ENCODE measurements at regions of chr9 and their contacts with region 1.

Region 1: GRCh38 chr9:9603345-9603744 is 1009.5 kb downstream of the PTPRD start:
- DNase-seq: no peak
- ATAC-seq: no peak
- H3K4me3 ChIP-seq: no peak overlapping the region
- H3K27ac ChIP-seq: no peak overlapping the region
- H3K4me1 ChIP-seq: no peaks in the 10 kb centered on the region
- H3K27me3 ChIP-seq: no peaks in the 10 kb centered on the region
- CTCF ChIP-seq: no peak
- EP300 ChIP-seq: no peak
- POLR2A ChIP-seq: no peak
- RAD21 ChIP-seq: no peak

Region 2: GRCh38 chr9:9645006-9645405 is 41.7 kb after region 1 on chr9:
- CTCF ChIA-PET with region 1: no interaction called
- POLR2A ChIA-PET with region 1: no interaction called
- in situ Hi-C with region 1: no loop called
- intact Hi-C with region 1: no loop called
- DNase-seq: no peak
- ATAC-seq: no peak
- H3K4me3 ChIP-seq: no peak overlapping the region
- H3K27ac ChIP-seq: no peak overlapping the region
- H3K4me1 ChIP-seq: no peaks in the 10 kb centered on the region
- H3K27me3 ChIP-seq: no peaks in the 10 kb centered on the region
- CTCF ChIP-seq: no peak
- EP300 ChIP-seq: no peak
- POLR2A ChIP-seq: no peak
- RAD21 ChIP-seq: no peak

Region 3: DNA sequence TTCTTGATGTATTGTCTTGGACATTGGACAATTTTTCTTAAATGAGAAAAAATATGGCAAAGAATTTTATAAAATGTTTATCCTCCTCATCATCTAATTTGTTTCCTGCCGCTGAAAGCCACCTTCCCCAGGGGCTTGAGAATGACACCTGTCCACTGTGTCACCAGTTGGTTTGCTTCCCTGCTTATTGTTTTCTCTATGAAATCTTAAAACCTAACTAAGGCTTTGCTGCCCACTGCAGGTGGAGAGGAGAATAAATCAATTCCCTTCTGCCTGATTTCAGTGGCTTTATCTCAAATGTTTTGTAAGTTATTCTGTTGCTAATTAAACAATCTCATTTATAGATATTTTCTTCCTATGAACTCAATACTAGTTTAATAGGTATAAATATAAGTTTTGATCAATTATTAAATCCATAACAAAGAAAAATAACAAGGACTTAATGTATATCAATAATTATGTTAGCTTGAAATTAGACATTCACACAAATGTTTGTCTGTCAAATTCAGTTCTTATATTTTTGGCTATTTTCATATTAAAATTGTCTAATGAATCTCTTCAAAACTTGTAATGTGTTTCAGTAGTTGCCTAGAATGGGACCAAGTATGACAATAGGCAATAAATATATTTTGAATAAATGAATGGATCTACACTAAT is 187.0 kb after region 1 on chr9:
- CTCF ChIA-PET with region 1: interaction called, 26 read pairs
- POLR2A ChIA-PET with region 1: no interaction called
- in situ Hi-C with region 1: loop called (anchors 5 kb)
- intact Hi-C with region 1: loop called (anchors 1 kb)
- DNase-seq: peak; percentile 45
- ATAC-seq: peak; percentile 57
- H3K4me3 ChIP-seq: no peak overlapping the region
- H3K27ac ChIP-seq: no peak overlapping the region
- H3K4me1 ChIP-seq: no peaks in the 10 kb centered on the region
- H3K27me3 ChIP-seq: no peaks in the 10 kb centered on the region
- CTCF ChIP-seq: peak; percentile 66
- EP300 ChIP-seq: no peak
- POLR2A ChIP-seq: no peak
- RAD21 ChIP-seq: no peak

Region 4: GRCh38 chr9:9846557-9846956 is 243.2 kb after region 1 on chr9:
- CTCF ChIA-PET with region 1: no interaction called
- POLR2A ChIA-PET with region 1: no interaction called
- in situ Hi-C with region 1: no loop called
- intact Hi-C with region 1: no loop called
- DNase-seq: no peak
- ATAC-seq: no peak
- H3K4me3 ChIP-seq: no peak overlapping the region
- H3K27ac ChIP-seq: no peak overlapping the region
- H3K4me1 ChIP-seq: no peaks in the 10 kb centered on the region
- H3K27me3 ChIP-seq: no peaks in the 10 kb centered on the region
- CTCF ChIP-seq: no peak
- EP300 ChIP-seq: no peak
- POLR2A ChIP-seq: no peak
- RAD21 ChIP-seq: no peak

Measured in HepG2 (cell line).